CD8-positive, alpha-beta T cell (primary cell): ENCODE measurements at regions of chr12 and their contacts with region 1.

Region 1: GRCh38 chr12:54749191-54749818 is 101.1 kb upstream of the DCD start:
- DNase-seq: peak in 6 of 9 experiments; percentile 23 to 82 (median 42)
- ATAC-seq: peak; percentile 67
- H3K4me3 ChIP-seq: no peak overlapping the region
- H3K4me3 Mint-ChIP-seq: peak overlapping the region; percentile 61
- H3K27ac ChIP-seq: no peak overlapping the region
- H3K27ac Mint-ChIP-seq: no peak overlapping the region
- H3K4me1 ChIP-seq: peaks cover 20% of the 10 kb centered on the region
- H3K4me1 Mint-ChIP-seq: peaks cover 34% of the 10 kb centered on the region
- H3K27me3 ChIP-seq: no peaks in the 10 kb centered on the region
- H3K27me3 Mint-ChIP-seq: no peaks in the 10 kb centered on the region
- CTCF ChIP-seq: peak; percentile 83

Region 2: DNA sequence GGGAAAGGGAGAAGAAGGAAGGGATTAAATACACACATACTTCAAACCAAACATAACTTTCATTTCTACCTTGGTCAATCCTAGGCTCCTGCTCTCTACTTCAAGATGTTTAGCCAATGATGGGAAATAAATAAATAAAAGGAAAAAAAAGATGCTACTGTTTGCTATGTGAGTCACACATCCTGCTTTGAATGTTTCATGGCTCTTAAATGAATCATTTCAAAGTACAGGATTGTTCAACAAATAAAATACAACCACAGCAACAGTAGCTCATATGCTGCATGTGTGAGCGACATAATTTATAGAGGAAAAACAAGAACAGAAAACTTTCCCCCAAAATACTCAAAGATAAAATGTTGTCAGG is 1187.7 kb before region 1 on chr12:
- CTCF ChIA-PET with region 1: no interaction called
- POLR2A ChIA-PET with region 1: no interaction called
- intact Hi-C with region 1: no loop called
- DNase-seq: no peak
- ATAC-seq: no peak
- H3K4me3 ChIP-seq: no peak overlapping the region
- H3K4me3 Mint-ChIP-seq: no peak overlapping the region
- H3K27ac ChIP-seq: no peak overlapping the region
- H3K27ac Mint-ChIP-seq: no peak overlapping the region
- H3K4me1 ChIP-seq: peaks cover 18% of the 10 kb centered on the region
- H3K4me1 Mint-ChIP-seq: peaks cover 42% of the 10 kb centered on the region
- H3K27me3 ChIP-seq: no peaks in the 10 kb centered on the region
- H3K27me3 Mint-ChIP-seq: no peaks in the 10 kb centered on the region
- CTCF ChIP-seq: no peak

Region 3: GRCh38 chr12:54723379-54724256 is 25.7 kb before region 1 on chr12:
- CTCF ChIA-PET with region 1: interaction called, 36 read pairs
- POLR2A ChIA-PET with region 1: interaction called, 5 read pairs
- intact Hi-C with region 1: no loop called
- DNase-seq: peak in 5 of 9 experiments; percentile 10 to 70 (median 26)
- ATAC-seq: peak; percentile 72
- H3K4me3 ChIP-seq: no peak overlapping the region
- H3K4me3 Mint-ChIP-seq: no peak overlapping the region
- H3K27ac ChIP-seq: no peak overlapping the region
- H3K27ac Mint-ChIP-seq: no peak overlapping the region
- H3K4me1 ChIP-seq: peaks cover 10% of the 10 kb centered on the region
- H3K4me1 Mint-ChIP-seq: peaks cover 18% of the 10 kb centered on the region
- H3K27me3 ChIP-seq: no peaks in the 10 kb centered on the region
- H3K27me3 Mint-ChIP-seq: peaks cover 6% of the 10 kb centered on the region
- CTCF ChIP-seq: peak; percentile 67

Region 4: DNA sequence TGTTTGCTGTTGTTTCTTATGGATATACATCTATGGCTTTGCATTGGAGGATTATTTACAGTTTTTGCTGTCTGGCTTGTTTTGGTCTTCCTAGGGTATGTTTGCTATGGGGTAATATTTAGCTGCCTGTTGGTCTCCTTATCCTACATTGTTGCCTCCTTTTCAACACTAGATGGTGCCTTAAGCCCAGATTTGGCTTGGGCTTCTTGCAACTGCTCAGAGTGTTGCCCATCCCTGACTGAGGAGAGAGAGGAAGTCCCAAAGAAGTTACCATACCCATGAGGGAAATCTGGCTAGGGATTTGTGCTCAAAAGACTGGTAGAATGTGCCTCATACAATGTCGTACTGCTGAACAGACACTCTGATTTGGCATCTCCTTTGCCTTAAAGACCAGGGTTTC is 10.4 kb after region 1 on chr12:
- CTCF ChIA-PET with region 1: interaction called, 35 read pairs
- POLR2A ChIA-PET with region 1: interaction called, 6 read pairs
- intact Hi-C with region 1: no loop called
- DNase-seq: peak in 2 of 9 experiments; percentile 24 to 48
- ATAC-seq: no peak
- H3K4me3 ChIP-seq: no peak overlapping the region
- H3K4me3 Mint-ChIP-seq: no peak overlapping the region
- H3K27ac ChIP-seq: no peak overlapping the region
- H3K27ac Mint-ChIP-seq: no peak overlapping the region
- H3K4me1 ChIP-seq: no peaks in the 10 kb centered on the region
- H3K4me1 Mint-ChIP-seq: peaks cover 9% of the 10 kb centered on the region
- H3K27me3 ChIP-seq: no peaks in the 10 kb centered on the region
- H3K27me3 Mint-ChIP-seq: no peaks in the 10 kb centered on the region
- CTCF ChIP-seq: no peak

Region 5: DNA sequence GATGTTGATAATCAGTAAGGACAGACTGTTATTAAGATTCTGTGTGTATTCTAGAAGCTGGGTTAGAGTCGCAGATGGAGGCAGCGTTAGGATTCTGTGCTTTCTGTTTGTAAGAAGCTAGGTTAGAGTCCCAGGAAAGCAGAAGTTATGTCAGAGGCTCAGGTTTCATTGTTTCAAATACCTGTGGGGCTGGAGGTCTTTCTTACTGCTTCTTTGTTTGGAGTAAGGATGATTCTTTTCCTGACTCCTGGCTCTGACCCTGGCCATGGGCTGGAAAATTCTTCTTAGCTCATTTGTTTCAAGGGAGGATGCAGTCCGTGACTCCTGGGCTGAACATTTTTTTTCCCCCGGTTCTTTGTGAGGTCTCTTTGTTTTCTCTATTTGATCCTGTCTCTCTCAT is 110.2 kb after region 1 on chr12:
- CTCF ChIA-PET with region 1: interaction called, 54 read pairs
- POLR2A ChIA-PET with region 1: interaction called, 3 read pairs
- intact Hi-C with region 1: loop called (anchors 1 to 2 kb)
- DNase-seq: no peak
- ATAC-seq: no peak
- H3K4me3 ChIP-seq: no peak overlapping the region
- H3K4me3 Mint-ChIP-seq: no peak overlapping the region
- H3K27ac ChIP-seq: no peak overlapping the region
- H3K27ac Mint-ChIP-seq: no peak overlapping the region
- H3K4me1 ChIP-seq: no peaks in the 10 kb centered on the region
- H3K4me1 Mint-ChIP-seq: no peaks in the 10 kb centered on the region
- H3K27me3 ChIP-seq: no peaks in the 10 kb centered on the region
- H3K27me3 Mint-ChIP-seq: peaks cover 15% of the 10 kb centered on the region
- CTCF ChIP-seq: no peak

Region 6: GRCh38 chr12:54958048-54958658 is 208.8 kb after region 1 on chr12:
- CTCF ChIA-PET with region 1: interaction called, 130 read pairs
- POLR2A ChIA-PET with region 1: interaction called, 5 read pairs
- intact Hi-C with region 1: loop called (anchors 1 kb)
- DNase-seq: peak; percentile 4 to 78 (median 48)
- ATAC-seq: peak; percentile 67
- H3K4me3 ChIP-seq: no peak overlapping the region
- H3K4me3 Mint-ChIP-seq: no peak overlapping the region
- H3K27ac ChIP-seq: no peak overlapping the region
- H3K27ac Mint-ChIP-seq: peak overlapping the region; percentile 52
- H3K4me1 ChIP-seq: peaks cover 75% of the 10 kb centered on the region
- H3K4me1 Mint-ChIP-seq: peaks cover 85% of the 10 kb centered on the region
- H3K27me3 ChIP-seq: no peaks in the 10 kb centered on the region
- H3K27me3 Mint-ChIP-seq: no peaks in the 10 kb centered on the region
- CTCF ChIP-seq: peak; percentile 75

Region 7: DNA sequence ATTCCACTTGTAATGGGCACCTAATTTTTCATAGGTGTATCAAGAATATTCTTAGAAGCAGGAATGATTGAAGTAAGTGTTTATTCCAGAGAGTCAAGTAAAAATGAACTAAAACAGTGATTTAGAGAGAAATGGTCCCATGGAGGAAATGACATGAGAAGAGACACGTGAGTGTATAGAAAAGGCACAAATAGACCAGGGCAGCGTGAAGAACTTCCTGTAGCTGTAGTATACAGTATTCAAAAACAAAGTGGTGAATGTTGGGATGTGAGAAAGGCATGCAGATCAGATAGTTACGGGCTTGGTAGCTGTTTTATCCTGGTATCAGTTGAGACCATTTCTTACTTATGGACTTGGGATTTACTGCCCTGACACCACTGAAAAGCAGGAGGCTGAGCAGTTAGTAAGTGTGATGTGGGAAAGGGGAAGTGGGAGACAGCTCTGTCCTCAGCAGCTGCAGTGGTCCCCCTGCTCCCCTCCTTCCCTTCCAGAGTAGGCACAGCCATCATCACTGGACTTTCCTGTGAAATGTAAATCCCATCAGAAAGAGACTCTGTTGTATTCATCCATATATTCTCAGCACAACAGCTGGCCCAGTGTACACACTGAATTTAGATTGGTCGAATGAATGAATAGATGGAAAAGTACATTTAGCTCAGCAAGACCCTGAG is 252.0 kb after region 1 on chr12:
- CTCF ChIA-PET with region 1: interaction called, 32 read pairs
- POLR2A ChIA-PET with region 1: no interaction called
- intact Hi-C with region 1: no loop called
- DNase-seq: no peak
- ATAC-seq: no peak
- H3K4me3 ChIP-seq: no peak overlapping the region
- H3K4me3 Mint-ChIP-seq: peak overlapping the region; percentile 23
- H3K27ac ChIP-seq: no peak overlapping the region
- H3K27ac Mint-ChIP-seq: peak overlapping the region; percentile 74
- H3K4me1 ChIP-seq: peaks cover 14% of the 10 kb centered on the region
- H3K4me1 Mint-ChIP-seq: peaks cover 18% of the 10 kb centered on the region
- H3K27me3 ChIP-seq: no peaks in the 10 kb centered on the region
- H3K27me3 Mint-ChIP-seq: no peaks in the 10 kb centered on the region
- CTCF ChIP-seq: no peak